A673 (cell line): ENCODE measurements at regions of chr3 and their contacts with region 1.

Region 1: DNA sequence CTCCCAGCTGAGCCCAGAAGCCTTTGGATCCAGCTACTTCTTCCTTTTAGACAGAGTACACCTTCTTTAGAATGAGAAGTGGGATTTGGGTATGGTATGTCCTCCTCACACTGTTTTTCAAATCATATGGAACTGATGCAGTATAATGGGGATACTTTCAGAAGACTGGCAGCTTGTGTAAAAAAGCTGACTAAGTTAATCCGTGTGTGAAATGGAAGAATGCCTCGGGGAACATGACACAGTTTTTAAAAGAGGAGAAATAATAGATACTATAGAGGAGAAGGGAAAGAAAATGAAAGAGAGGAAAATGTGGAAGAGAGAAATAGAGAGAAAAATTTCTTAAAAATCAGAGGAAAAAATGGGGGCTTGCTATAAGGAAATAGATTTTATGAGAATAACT is 47.7 kb downstream of the TUSC7 start:
- DNase-seq: peak; percentile 32
- H3K4me3 ChIP-seq: no peak overlapping the region
- H3K27ac ChIP-seq: no peak overlapping the region
- H3K4me1 ChIP-seq: peaks cover 22% of the 10 kb centered on the region
- H3K27me3 ChIP-seq: no peaks in the 10 kb centered on the region
- CTCF ChIP-seq: no peak

Region 2: GRCh38 chr3:116140100-116140689 is 617.1 kb before region 1 on chr3:
- CTCF ChIA-PET with region 1: no interaction called
- POLR2A ChIA-PET with region 1: no interaction called
- intact Hi-C with region 1: loop called (anchors 2 kb)
- DNase-seq: peak; percentile 80
- H3K4me3 ChIP-seq: no peak overlapping the region
- H3K27ac ChIP-seq: no peak overlapping the region
- H3K4me1 ChIP-seq: peaks cover 17% of the 10 kb centered on the region
- H3K27me3 ChIP-seq: no peaks in the 10 kb centered on the region
- CTCF ChIP-seq: peak; percentile 91

Region 3: GRCh38 chr3:116238846-116239565 is 518.3 kb before region 1 on chr3:
- CTCF ChIA-PET with region 1: no interaction called
- POLR2A ChIA-PET with region 1: no interaction called
- intact Hi-C with region 1: no loop called
- DNase-seq: no peak
- H3K4me3 ChIP-seq: no peak overlapping the region
- H3K27ac ChIP-seq: no peak overlapping the region
- H3K4me1 ChIP-seq: peaks cover 18% of the 10 kb centered on the region
- H3K27me3 ChIP-seq: no peaks in the 10 kb centered on the region
- CTCF ChIP-seq: no peak

Region 4: DNA sequence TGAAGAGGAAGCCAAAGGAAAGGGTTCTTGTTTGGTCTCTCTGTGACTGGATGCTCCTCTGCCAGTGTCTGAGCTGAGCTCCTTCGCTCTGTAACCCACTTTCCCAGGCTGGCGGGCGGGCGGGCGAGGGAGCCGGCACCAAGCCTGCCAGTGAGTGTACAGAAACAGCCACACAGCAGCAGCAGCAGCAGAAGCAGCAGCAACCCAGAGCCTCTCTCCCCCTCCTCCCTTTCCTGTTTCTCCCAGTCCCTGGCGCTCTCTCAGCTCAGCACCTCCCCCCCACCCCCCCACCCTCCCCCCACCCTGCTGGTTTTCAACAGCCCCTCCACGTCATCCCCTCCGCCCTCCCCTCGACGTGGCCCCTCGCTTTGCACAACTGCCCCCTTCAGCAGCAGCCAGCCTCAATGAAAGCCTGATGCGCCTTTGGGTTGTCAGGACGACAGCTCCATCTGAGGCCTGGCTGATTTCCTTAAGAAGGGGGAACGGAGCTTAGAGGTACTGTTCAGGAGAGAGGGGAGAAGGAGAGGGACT is 311.9 kb before region 1 on chr3 and contains the start of gene LSAMP:
- CTCF ChIA-PET with region 1: no interaction called
- POLR2A ChIA-PET with region 1: no interaction called
- intact Hi-C with region 1: loop called (anchors 10 kb)
- DNase-seq: peak; percentile 71
- H3K4me3 ChIP-seq: peak within 1 kb of the TSS; percentile 56
- H3K27ac ChIP-seq: peak within 1 kb of the TSS; percentile 26
- H3K4me1 ChIP-seq: peaks cover 9% of the 10 kb centered on the region
- H3K27me3 ChIP-seq: no peaks in the 10 kb centered on the region
- CTCF ChIP-seq: no peak
- total RNA-seq, gene LSAMP: 10.1 and 12.5 TPM in 2 replicates

Region 5: GRCh38 chr3:116614795-116615362 is 142.4 kb before region 1 on chr3:
- CTCF ChIA-PET with region 1: no interaction called
- POLR2A ChIA-PET with region 1: no interaction called
- intact Hi-C with region 1: loop called (anchors 2 kb)
- DNase-seq: peak; percentile 62
- H3K4me3 ChIP-seq: no peak overlapping the region
- H3K27ac ChIP-seq: no peak overlapping the region
- H3K4me1 ChIP-seq: no peaks in the 10 kb centered on the region
- H3K27me3 ChIP-seq: no peaks in the 10 kb centered on the region
- CTCF ChIP-seq: peak; percentile 59

Region 6: GRCh38 chr3:116809208-116809607 is 51.9 kb after region 1 on chr3:
- CTCF ChIA-PET with region 1: no interaction called
- POLR2A ChIA-PET with region 1: interaction called, 21 read pairs
- intact Hi-C with region 1: no loop called
- DNase-seq: no peak
- H3K4me3 ChIP-seq: no peak overlapping the region
- H3K27ac ChIP-seq: no peak overlapping the region
- H3K4me1 ChIP-seq: peaks cover 8% of the 10 kb centered on the region
- H3K27me3 ChIP-seq: no peaks in the 10 kb centered on the region
- CTCF ChIP-seq: no peak

Region 7: DNA sequence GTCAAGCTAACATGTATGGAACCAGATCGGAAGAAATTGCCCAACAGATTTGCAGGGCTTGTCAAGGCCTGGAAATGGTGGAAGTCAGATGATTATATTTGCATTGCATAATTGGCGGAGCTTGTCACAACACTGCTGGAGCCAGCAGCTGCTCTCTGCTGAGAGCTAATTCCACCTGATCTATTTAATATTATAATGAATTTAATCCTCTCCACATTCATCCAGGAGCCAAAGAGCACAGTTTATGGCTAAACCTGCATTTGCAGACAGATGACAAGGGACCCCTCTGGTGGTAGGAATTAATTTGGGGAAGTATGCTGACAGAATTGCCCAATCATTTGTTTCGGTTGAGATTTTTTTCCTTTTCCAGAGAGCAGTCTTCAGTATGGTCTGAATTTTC is 682.5 kb after region 1 on chr3:
- CTCF ChIA-PET with region 1: no interaction called
- POLR2A ChIA-PET with region 1: no interaction called
- intact Hi-C with region 1: no loop called
- DNase-seq: peak; percentile 58
- H3K4me3 ChIP-seq: no peak overlapping the region
- H3K27ac ChIP-seq: no peak overlapping the region
- H3K4me1 ChIP-seq: no peaks in the 10 kb centered on the region
- H3K27me3 ChIP-seq: no peaks in the 10 kb centered on the region
- CTCF ChIP-seq: peak; percentile 59